Calu3 (cell line): ENCODE measurements at regions of chr5 and their contacts with region 1.

Region 1: DNA sequence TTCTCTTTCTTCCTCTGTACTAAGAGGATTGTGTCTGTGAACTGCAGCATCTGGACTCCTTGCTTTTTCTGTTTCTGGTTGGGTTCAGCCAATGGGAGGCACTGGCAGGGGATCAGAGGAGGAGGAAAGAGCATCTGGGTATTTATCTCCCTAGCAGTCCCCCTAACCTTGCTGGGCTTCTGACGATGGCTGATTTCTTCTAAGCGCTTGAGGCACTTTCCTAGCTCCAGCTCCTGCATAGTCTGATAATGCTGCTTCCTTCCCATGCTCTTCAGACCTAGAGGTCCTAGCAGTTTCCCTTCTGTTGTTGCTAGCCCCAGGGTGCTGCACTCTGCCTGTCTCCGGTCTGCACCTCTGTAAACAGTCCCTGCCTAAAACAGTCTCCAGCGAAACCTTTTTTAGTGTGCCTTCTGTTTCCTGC is 225.1 kb downstream of the PDZD2 start:
- DNase-seq: no peak
- H3K4me3 Mint-ChIP-seq: no peak overlapping the region
- H3K27ac Mint-ChIP-seq: no peak overlapping the region
- H3K4me1 Mint-ChIP-seq: no peaks in the 10 kb centered on the region
- H3K27me3 Mint-ChIP-seq: peaks cover 29% of the 10 kb centered on the region
- CTCF ChIP-seq: no peak

Region 2: GRCh38 chr5:31598640-31599611 is 265.1 kb before region 1 on chr5:
- CTCF ChIA-PET with region 1: no interaction called
- intact Hi-C with region 1: no loop called
- DNase-seq: no peak
- H3K4me3 Mint-ChIP-seq: no peak overlapping the region
- H3K27ac Mint-ChIP-seq: no peak overlapping the region
- H3K4me1 Mint-ChIP-seq: no peaks in the 10 kb centered on the region
- H3K27me3 Mint-ChIP-seq: peaks cover 45% of the 10 kb centered on the region
- CTCF ChIP-seq: no peak

Region 3: GRCh38 chr5:31886206-31886605 is 22.2 kb after region 1 on chr5:
- CTCF ChIA-PET with region 1: no interaction called
- intact Hi-C with region 1: loop called (anchors 1 kb)
- DNase-seq: no peak
- H3K4me3 Mint-ChIP-seq: no peak overlapping the region
- H3K27ac Mint-ChIP-seq: no peak overlapping the region
- H3K4me1 Mint-ChIP-seq: peaks cover 14% of the 10 kb centered on the region
- H3K27me3 Mint-ChIP-seq: peaks cover 44% of the 10 kb centered on the region
- CTCF ChIP-seq: no peak